Dendritic cell treated with granulocyte-macrophage colony-stimulating factor and Interleukin-4, amounts not matched to agents 40 ng/mL and 50 ng/mL, for 4 days (primary cell): ENCODE measurements at regions of chr3 and their contacts with region 1.

Region 1: DNA sequence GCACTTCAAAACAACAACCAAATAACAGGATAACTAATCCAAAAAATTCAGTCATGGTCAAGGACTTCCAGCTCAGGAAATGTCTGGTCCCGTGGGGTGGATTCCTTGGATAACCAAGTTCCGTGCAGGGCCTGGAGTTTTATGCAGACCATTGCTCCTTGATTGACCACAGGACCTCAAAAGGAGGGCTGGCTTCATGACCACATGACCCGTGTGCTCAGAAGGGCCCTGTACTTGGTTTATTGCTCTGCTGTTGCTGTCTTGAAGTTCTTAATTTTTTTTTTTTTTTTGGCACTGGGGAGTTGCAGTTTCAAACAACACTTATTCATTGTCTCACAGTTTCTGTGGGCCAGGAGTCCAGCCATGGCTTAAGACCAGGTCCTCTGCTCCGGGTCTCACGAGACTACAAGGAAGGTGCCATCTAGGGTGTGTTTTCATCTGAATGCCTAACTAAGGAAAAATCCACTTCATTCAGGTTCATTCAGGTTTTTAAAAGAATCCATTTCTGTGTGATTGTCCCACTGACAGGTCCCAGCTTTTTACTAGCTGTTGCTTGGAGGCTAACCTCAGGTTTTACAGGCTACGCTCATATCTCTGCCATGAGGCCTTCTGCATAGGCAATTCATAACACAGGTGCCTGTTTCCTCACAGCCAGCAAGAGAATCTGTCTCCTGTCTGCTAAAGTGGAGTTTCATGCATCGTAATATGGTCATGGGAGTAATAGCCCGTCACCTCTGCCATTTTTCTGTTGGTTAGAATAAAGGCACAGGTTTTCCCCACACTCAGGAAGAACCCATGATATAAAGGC is 65.3 kb downstream of the FLNB start:
- H3K4me3 Mint-ChIP-seq: no peak overlapping the region
- H3K27ac Mint-ChIP-seq: no peak overlapping the region
- H3K4me1 Mint-ChIP-seq: peaks cover 12% of the 10 kb centered on the region
- H3K27me3 Mint-ChIP-seq: no peaks in the 10 kb centered on the region

Region 2: GRCh38 chr3:58034738-58035523 is 38.6 kb before region 1 on chr3:
- intact Hi-C with region 1: loop called (anchors 5 kb)
- H3K4me3 Mint-ChIP-seq: no peak overlapping the region
- H3K27ac Mint-ChIP-seq: no peak overlapping the region
- H3K4me1 Mint-ChIP-seq: peaks cover 26% of the 10 kb centered on the region
- H3K27me3 Mint-ChIP-seq: no peaks in the 10 kb centered on the region